ENCODE measurements at regions of chr22 and their contacts with region 1.

Region 1: DNA sequence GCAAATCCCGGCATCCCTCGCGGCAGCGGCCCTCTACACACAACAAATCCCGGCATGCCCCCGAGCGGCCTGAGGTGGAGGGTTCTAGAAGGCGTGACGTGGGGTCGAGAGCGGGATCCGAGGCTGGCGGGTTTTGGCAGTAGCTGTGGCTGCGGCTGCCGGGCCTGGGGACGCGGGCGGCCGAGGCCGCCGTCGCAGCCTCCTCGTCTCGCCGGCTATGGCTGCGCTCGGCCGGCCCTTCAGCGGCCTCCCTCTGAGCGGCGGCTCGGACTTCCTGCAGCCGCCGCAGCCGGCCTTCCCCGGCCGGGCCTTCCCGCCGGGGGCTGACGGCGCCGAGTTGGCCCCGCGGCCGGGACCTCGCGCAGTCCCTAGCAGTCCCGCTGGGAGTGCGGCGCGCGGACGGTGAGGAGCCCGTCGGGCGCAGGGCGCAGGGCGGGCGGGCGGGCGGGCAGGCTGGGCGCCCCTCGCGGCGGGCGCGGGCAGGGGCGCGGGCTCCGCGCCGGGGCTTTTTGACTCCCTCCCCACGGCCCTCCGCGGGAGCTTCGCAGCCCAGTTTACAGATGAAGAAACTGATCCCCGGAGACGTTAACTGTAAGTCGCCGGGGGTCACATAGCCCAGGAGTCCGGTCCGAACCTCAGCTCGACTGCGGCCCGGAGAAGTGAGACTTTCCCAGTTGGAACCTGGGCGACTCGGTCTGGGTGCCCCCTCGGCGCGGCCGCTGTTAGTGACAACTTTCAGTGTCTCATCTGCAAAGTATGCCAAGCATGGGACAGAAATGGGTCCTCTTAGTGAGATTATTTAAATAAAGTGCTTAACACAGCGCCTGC is at the start of gene CCDC117:
- DNase-seq: peak; percentile 97
- H3K4me3 Mint-ChIP-seq: peak within 1 kb of the TSS; percentile 99
- H3K27ac Mint-ChIP-seq: peak within 1 kb of the TSS; percentile 98
- H3K4me1 Mint-ChIP-seq: peaks cover 29% of the 10 kb centered on the region
- H3K27me3 Mint-ChIP-seq: no peaks in the 10 kb centered on the region
- total RNA-seq, gene CCDC117: 28.2 to 28.6 TPM

Region 2: DNA sequence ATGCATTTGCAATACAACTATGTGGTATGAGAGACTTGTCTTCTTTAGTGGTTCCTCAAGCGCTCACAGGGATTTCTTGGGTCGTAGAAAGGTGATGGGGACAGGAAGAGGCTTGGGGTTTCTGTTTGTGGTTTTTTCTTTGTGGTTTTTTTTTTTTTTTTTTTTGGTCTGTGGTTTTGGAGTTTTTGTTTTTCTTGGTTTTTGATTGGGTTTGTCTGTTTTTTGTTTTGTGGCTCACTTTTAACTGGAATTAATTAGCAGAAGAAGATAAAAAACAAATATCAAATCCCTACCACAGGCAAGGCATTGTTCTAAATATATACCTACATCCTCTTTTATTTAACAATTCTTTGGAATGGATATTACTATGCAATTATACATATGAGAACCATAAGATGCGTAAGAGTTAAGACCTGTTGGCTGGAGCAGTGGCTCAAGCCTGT is 98.7 kb before region 1 on chr22:
- CTCF ChIA-PET with region 1: no interaction called
- intact Hi-C with region 1: loop called (anchors 5 kb)
- DNase-seq: peak; percentile 27
- H3K4me3 Mint-ChIP-seq: peak overlapping the region; percentile 55
- H3K27ac Mint-ChIP-seq: peak overlapping the region; percentile 87
- H3K4me1 Mint-ChIP-seq: peaks cover 28% of the 10 kb centered on the region
- H3K27me3 Mint-ChIP-seq: peaks cover 64% of the 10 kb centered on the region

Region 3: DNA sequence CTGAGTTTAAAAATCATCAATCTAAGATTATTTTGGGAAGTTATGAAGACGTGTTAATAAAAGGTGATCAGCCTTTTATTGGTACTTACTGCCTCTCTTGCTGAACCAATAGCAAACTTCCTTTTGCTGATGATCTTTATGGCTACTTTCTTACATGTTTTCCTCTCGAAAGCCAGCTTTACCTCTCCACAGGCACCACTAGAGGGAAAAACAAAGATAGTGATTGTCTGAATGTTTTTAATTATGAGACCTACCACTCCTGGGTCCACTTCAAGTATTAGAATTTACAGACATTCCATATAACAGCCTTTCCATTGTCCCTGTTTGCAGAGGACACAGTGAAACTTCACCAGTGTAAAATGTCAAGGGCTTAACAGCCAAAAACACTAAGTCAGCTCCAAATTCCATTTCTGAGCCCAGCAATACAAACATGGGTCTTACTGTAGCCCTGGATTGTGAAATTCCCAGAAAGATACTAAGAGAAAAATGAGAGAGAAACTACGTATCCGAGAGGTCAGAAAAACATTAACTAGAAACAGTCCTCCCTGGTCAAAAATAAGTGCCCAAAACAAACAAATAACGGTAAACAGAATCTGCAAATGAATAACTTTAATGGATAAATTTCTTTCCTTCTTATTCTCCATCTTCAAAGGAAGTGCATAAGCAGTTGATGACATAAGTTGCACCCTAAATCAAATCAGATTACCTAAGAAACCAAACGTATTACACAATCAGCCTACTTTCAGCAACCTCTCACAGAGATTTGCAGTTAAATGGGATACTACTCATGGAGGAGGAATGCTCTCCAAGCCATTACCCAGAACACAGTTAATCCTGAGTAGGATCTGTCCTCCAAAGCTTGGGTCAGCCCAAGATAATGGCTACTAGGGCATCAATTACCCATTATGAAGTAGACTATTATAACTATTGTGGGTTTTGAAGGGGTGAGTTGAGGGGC is 60.7 kb before region 1 on chr22:
- CTCF ChIA-PET with region 1: no interaction called
- intact Hi-C with region 1: no loop called
- DNase-seq: no peak
- H3K4me3 Mint-ChIP-seq: no peak overlapping the region
- H3K27ac Mint-ChIP-seq: no peak overlapping the region
- H3K4me1 Mint-ChIP-seq: peaks cover 10% of the 10 kb centered on the region
- H3K27me3 Mint-ChIP-seq: no peaks in the 10 kb centered on the region

Region 4: GRCh38 chr22:28810821-28811491 is 38.1 kb after region 1 on chr22:
- CTCF ChIA-PET with region 1: interaction called, 6 read pairs
- intact Hi-C with region 1: loop called (anchors 1 kb)
- DNase-seq: peak; percentile 66
- H3K4me3 Mint-ChIP-seq: peak overlapping the region; percentile 54
- H3K27ac Mint-ChIP-seq: peak overlapping the region; percentile 53
- H3K4me1 Mint-ChIP-seq: peaks cover 61% of the 10 kb centered on the region
- H3K27me3 Mint-ChIP-seq: no peaks in the 10 kb centered on the region

Region 5: GRCh38 chr22:28955817-28956216 is 183.0 kb after region 1 on chr22:
- CTCF ChIA-PET with region 1: no interaction called
- intact Hi-C with region 1: loop called (anchors 5 kb)
- DNase-seq: peak; percentile 95
- H3K4me3 Mint-ChIP-seq: no peak overlapping the region
- H3K27ac Mint-ChIP-seq: no peak overlapping the region
- H3K4me1 Mint-ChIP-seq: peaks cover 35% of the 10 kb centered on the region
- H3K27me3 Mint-ChIP-seq: peaks cover 76% of the 10 kb centered on the region

Region 6: GRCh38 chr22:29022101-29022817 is 249.4 kb after region 1 on chr22:
- CTCF ChIA-PET with region 1: no interaction called
- intact Hi-C with region 1: no loop called
- DNase-seq: no peak
- H3K4me3 Mint-ChIP-seq: no peak overlapping the region
- H3K27ac Mint-ChIP-seq: no peak overlapping the region
- H3K4me1 Mint-ChIP-seq: no peaks in the 10 kb centered on the region
- H3K27me3 Mint-ChIP-seq: peaks cover 5% of the 10 kb centered on the region

Region 7: DNA sequence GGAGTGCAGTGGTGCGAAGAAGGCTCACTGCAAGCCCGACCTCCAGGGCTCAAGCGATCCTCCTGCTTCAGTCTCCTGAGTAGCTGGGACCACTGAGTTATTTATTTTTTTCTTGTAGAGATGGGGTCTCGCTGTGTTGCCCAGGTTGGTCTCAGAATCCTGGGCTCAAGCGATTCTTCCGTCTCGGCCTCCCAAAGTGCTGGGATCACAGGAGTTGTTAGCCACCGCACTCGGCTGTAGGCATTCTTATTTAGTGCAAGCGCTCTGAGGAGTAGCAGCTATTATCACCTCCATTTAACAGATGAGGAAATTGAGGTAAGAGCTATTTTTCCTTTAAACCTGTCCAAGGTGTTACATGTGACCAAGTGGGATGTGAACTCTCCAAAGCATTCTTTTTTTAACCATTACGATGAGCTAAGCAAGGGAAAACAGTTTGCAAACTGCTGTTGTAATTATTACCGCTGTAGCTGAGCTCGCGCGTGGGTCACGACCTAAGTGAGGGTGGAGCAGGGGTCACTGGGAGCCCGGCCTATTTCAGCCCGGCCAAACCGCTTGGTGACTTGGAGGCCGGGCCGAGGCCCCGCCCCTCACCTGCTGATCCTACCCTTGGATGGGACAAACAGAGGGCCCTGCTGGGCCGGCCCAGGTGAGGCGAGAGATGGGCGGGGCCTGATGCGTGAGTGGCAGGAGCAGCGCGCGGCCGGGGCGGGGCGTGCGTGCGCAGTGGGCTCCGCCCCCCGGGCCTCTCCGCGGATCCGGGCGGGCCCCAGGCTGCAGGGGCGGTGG is 299.5 kb after region 1 on chr22:
- CTCF ChIA-PET with region 1: no interaction called
- intact Hi-C with region 1: loop called (anchors 1 kb)
- DNase-seq: peak; percentile 87
- H3K4me3 Mint-ChIP-seq: peak overlapping the region; percentile 65
- H3K27ac Mint-ChIP-seq: no peak overlapping the region
- H3K4me1 Mint-ChIP-seq: peaks cover 20% of the 10 kb centered on the region
- H3K27me3 Mint-ChIP-seq: peaks cover 49% of the 10 kb centered on the region

Measured in activated naive CD4-positive, alpha-beta T cell treated with anti-CD3 and anti-CD28 coated beads for 36 hours (primary cell).